PC-9 (cell line): ENCODE measurements at regions of chr7 and their contacts with region 1.

Region 1: DNA sequence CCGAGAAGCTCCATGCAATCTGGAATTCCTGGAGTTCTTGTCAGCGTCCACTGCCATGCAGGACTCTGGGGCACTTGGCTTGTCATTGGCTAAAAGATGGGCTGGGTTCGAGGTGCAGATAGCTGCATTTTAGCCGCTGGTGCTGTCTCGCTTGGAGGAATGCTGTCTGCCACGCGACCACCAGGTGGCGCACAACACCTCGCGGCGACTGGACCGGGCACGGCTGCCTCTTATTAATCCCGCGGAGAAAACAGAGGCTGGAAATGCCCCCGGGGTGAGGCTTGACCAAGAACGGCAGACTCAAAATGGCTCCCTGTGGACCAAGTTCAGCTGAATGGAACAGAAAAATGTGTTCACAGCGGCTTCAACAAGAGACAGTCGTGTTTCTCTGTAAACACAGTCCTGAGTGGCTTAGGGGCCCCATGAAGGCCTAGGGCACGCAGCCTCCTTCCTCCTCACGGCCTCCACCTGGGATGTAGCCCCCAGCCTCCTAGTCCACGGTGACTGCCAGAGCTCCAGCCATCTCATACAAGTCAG is 46.2 kb downstream of the AOC1 start:
- DNase-seq: peak in 1 of 2 experiments; percentile 82
- H3K4me3 ChIP-seq: no peak overlapping the region
- H3K27ac ChIP-seq: no peak overlapping the region
- H3K4me1 ChIP-seq: no peaks in the 10 kb centered on the region
- H3K27me3 ChIP-seq: peaks cover 29% of the 10 kb centered on the region
- CTCF ChIP-seq: peak; percentile 95

Region 2: GRCh38 chr7:150988230-150989226 is 90.0 kb after region 1 on chr7:
- CTCF ChIA-PET with region 1: no interaction called
- POLR2A ChIA-PET with region 1: no interaction called
- intact Hi-C with region 1: loop called (anchors 1 kb)
- DNase-seq: no peak
- H3K4me3 ChIP-seq: no peak overlapping the region
- H3K27ac ChIP-seq: no peak overlapping the region
- H3K4me1 ChIP-seq: no peaks in the 10 kb centered on the region
- H3K27me3 ChIP-seq: peaks cover 22% of the 10 kb centered on the region; the same call in 1 of the 2 replicates
- CTCF ChIP-seq: peak; percentile 58; the same call in 1 of the 2 replicates